PC-9 (cell line): ENCODE measurements at regions of chr1 and their contacts with region 1.

Region 1: GRCh38 chr1:221478050-221478949 is 263.6 kb downstream of the DUSP10 start:
- DNase-seq: peak; percentile 74 to 80
- H3K4me3 ChIP-seq: no peak overlapping the region
- H3K27ac ChIP-seq: no peak overlapping the region
- H3K4me1 ChIP-seq: peaks cover 13% of the 10 kb centered on the region
- H3K27me3 ChIP-seq: no peaks in the 10 kb centered on the region
- CTCF ChIP-seq: peak; percentile 79

Region 2: GRCh38 chr1:221543529-221544120 is 65.3 kb after region 1 on chr1:
- CTCF ChIA-PET with region 1: no interaction called
- POLR2A ChIA-PET with region 1: no interaction called
- intact Hi-C with region 1: loop called (anchors 2 kb)
- DNase-seq: peak in 1 of 2 experiments; percentile 3
- H3K4me3 ChIP-seq: no peak overlapping the region
- H3K27ac ChIP-seq: no peak overlapping the region
- H3K4me1 ChIP-seq: no peaks in the 10 kb centered on the region
- H3K27me3 ChIP-seq: no peaks in the 10 kb centered on the region
- CTCF ChIP-seq: peak; percentile 67

Region 3: GRCh38 chr1:221637641-221638041 is 159.3 kb after region 1 on chr1:
- CTCF ChIA-PET with region 1: no interaction called
- POLR2A ChIA-PET with region 1: no interaction called
- intact Hi-C with region 1: no loop called
- DNase-seq: no peak
- H3K4me3 ChIP-seq: no peak overlapping the region
- H3K27ac ChIP-seq: no peak overlapping the region
- H3K4me1 ChIP-seq: no peaks in the 10 kb centered on the region
- H3K27me3 ChIP-seq: no peaks in the 10 kb centered on the region
- CTCF ChIP-seq: no peak

Region 4: DNA sequence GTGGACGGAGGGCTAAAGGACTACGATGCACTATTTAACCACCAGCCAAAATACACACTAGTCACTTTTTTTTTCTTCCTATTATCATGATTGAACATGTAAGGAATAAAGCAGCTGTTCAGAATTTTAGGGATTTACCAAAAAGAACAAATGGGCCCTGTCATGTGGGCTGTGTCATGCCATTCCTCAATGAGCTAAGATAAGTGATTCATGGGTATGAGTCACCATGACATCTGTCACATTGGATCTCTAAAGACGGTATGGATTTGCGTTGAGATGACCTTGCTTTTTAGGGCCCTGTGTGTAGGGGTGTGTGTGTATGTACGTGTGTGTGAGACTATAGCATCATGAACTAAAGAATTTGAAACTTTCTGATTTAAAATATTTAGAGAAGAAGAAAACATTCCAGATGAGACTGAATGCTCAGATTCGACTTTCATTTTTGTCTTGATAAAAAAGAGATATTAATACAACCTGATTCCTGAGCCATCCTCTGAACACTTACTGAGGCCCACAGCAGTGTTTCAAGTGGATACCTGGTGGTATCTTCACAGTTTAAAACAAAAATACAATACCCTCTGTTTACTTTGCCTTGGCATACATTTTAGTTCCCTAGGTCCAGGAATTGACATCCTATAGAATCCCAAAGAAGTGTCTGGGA is 509.7 kb after region 1 on chr1:
- CTCF ChIA-PET with region 1: no interaction called
- POLR2A ChIA-PET with region 1: no interaction called
- intact Hi-C with region 1: loop called (anchors 10 kb)
- DNase-seq: peak in 1 of 2 experiments; percentile 55
- H3K4me3 ChIP-seq: no peak overlapping the region
- H3K27ac ChIP-seq: peak overlapping the region; percentile 36
- H3K4me1 ChIP-seq: 0 out of 2 replicates have a peak, but pooled peaks cover 9% of the 10 kb centered on the region
- H3K27me3 ChIP-seq: no peaks in the 10 kb centered on the region
- CTCF ChIP-seq: no peak

Region 5: GRCh38 chr1:222095606-222096475 is 617.5 kb after region 1 on chr1:
- CTCF ChIA-PET with region 1: no interaction called
- POLR2A ChIA-PET with region 1: no interaction called
- intact Hi-C with region 1: loop called (anchors 1 kb)
- DNase-seq: peak in 1 of 2 experiments; percentile 11
- H3K4me3 ChIP-seq: no peak overlapping the region
- H3K27ac ChIP-seq: no peak overlapping the region
- H3K4me1 ChIP-seq: peaks cover 12% of the 10 kb centered on the region
- H3K27me3 ChIP-seq: no peaks in the 10 kb centered on the region
- CTCF ChIP-seq: peak; percentile 84

Region 6: DNA sequence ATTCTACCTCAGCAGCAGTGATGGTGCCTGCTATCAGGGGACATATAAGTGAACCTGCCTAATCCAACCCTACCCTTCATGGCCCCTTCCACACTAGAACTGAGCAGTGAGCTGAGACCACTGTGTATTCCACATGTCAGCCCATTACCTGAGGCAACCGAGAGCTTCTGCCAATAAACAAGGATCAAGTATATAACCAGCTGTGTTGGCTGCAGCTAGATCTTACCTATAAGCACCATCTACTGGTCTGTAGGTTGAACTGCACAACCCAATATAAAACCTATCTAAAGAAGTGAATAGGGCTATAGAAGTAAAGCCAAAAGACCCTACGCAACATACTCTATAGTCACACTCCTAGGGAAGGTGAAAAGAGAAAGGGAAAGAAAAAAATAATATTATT is 692.7 kb after region 1 on chr1:
- CTCF ChIA-PET with region 1: no interaction called
- POLR2A ChIA-PET with region 1: no interaction called
- intact Hi-C with region 1: loop called (anchors 1 kb)
- DNase-seq: peak; percentile 3 to 38
- H3K4me3 ChIP-seq: no peak overlapping the region
- H3K27ac ChIP-seq: no peak overlapping the region
- H3K4me1 ChIP-seq: no peaks in the 10 kb centered on the region
- H3K27me3 ChIP-seq: no peaks in the 10 kb centered on the region
- CTCF ChIP-seq: peak; percentile 85